Uterus (tissue), 4 donors: ENCODE measurements at regions of chr4 and their contacts with region 1.

Region 1: DNA sequence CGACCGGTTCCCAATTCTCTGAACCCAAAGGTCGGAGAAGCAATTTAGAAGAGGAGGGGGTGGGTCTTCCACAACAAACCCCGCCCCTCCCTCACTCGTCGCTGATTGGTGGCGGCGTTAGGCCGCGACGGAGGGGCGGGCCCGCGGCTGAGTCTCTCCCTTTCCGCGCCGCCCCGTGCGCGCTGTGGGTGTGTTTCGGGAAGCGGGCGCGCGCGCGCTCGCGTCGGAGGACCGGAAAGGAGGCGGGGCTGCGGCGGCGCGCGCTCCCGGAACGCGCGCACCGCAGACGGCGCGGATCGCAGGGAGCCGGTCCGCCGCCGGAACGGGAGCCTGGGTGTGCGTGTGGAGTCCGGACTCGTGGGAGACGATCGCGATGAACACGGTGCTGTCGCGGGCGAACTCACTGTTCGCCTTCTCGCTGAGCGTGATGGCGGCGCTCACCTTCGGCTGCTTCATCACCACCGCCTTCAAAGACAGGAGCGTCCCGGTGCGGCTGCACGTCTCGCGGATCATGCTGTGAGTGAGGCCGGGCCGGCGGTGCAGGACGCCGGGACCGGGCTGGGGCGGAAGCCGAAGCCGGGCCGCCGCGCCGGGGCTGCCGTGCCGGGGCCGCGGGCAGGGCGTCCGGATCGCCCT is at the start of gene SPCS3:
- DNase-seq: peak; percentile 95
- H3K4me3 ChIP-seq: peak within 1 kb of the TSS; percentile 84 to 93
- H3K27ac ChIP-seq: peak within 1 kb of the TSS; percentile 98 to 99
- H3K4me1 ChIP-seq: peaks cover 0 to 4% of the 10 kb centered on the region in 2 donors
- H3K27me3 ChIP-seq: no peaks in the 10 kb centered on the region
- CTCF ChIP-seq: no peak
- POLR2A ChIP-seq: peak; percentile 87 to 95
- total RNA-seq, gene SPCS3: 37.9 to 160 (median 115) TPM

Region 2: DNA sequence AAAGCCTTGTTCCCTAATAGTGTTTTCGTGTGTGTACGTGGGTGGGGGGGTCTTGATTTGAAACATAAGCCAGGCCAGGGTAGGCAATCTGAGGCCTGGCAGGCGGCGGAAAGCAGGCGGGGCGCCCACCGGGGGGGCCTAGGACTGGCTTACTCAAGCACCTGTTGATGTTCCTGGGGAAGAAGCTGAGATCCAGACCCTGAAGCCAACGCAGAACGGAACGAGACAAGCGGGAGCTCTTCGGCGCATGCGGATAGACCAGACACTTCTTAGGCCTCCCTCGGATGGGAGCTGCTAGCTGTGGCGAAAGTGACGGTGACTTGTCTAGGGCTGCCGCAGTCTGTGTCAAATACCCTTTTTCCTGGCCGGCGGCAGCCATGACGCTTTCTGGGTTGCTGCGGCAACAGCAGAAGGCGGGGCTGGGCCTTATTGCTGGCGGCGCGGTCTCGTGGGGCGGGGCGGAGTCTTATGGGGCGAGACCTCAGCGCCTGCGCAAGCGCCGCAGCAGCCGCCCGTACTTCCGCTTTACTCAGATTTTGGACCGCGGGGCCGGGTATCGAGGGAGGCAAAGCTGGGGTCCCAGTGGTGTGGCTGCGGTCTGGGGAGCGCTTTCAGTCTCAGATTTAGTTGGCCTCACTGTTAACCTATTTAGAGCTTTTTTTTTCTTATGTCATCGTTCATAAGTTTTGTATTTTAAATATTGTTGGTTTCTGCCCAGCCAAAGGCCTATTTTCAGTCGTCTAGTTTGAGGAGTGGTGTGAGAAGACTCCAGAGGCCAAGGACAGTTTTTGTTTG is 124.4 kb before region 1 on chr4 and contains the start of gene SPATA4:
- intact Hi-C with region 1: loop called (anchors 10 kb)
- DNase-seq: peak; percentile 91 to 93
- H3K4me3 ChIP-seq: peak within 1 kb of the TSS; percentile 45 to 50
- H3K27ac ChIP-seq: peak within 1 kb of the TSS; percentile 69 to 77
- H3K4me1 ChIP-seq: peaks cover 0 to 4% of the 10 kb centered on the region in 2 donors
- H3K27me3 ChIP-seq: no peaks in the 10 kb centered on the region
- CTCF ChIP-seq: no peak
- POLR2A ChIP-seq: peak; percentile 22 to 45
- total RNA-seq, gene SPATA4: 0.40 to 1.6 TPM in 2 of 4 donors, not detected in the others